ENCODE measurements at regions of chr3 and their contacts with region 1.

Region 1: GRCh38 chr3:155079746-155080487 is at the start of gene MME:
- DNase-seq: no peak
- H3K4me3 ChIP-seq: peak within 1 kb of the TSS; percentile 81
- H3K27ac ChIP-seq: peak within 1 kb of the TSS; percentile 49
- H3K27me3 ChIP-seq: no peaks in the 10 kb centered on the region
- CTCF ChIP-seq: no peak
- polyA plus RNA-seq, gene MME: 51.6 and 61.7 TPM in 2 replicates

Region 2: DNA sequence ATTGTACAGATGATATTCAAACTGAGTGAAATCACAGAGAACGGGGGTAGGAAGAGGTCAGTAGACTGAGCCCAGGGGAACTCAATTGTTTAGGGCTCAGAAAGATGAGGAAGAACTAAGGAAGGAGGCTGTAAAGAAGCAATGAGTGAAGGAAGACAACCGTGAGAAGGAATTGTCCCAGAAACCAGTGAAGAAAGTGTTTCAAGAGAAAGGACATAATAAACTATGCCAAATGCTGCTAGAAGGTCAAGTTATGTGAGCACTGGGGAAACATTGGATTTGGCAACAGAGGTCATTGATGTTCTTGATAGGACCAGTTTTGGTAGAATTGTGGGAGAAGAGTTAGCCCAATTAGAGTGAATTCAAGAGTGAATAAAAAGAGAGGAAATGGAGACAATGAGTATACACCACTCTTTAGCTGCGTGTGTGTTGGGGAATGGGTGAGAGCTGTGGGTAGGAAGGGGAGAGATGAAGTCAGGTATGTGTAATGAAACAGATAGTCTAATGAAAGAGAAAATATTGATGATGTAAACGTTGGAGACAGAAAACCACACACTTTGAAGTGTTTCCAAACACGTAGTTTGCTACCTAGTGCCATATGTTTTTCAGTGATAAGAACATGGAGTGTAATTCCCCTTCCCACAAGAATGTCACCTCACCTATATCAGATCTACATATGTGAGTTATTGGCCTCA is 42.3 kb before region 1 on chr3:
- CTCF ChIA-PET with region 1: no interaction called
- POLR2A ChIA-PET with region 1: no interaction called
- DNase-seq: no peak
- H3K4me3 ChIP-seq: no peak overlapping the region
- H3K27ac ChIP-seq: no peak overlapping the region
- H3K27me3 ChIP-seq: no peaks in the 10 kb centered on the region
- CTCF ChIP-seq: no peak

Region 3: GRCh38 chr3:155069729-155070128 is 10.2 kb before region 1 on chr3:
- CTCF ChIA-PET with region 1: interaction called, 11 read pairs
- POLR2A ChIA-PET with region 1: no interaction called
- DNase-seq: no peak
- H3K4me3 ChIP-seq: no peak overlapping the region
- H3K27ac ChIP-seq: peak overlapping the region; percentile 74
- H3K27me3 ChIP-seq: no peaks in the 10 kb centered on the region
- CTCF ChIP-seq: no peak

Measured in AG04450 (cell line).